MCF 10A (cell line): ENCODE measurements at regions of chr4 and their contacts with region 1.

Region 1: GRCh38 chr4:185039508-185040273 is 21.4 kb downstream of the HELT start:
- DNase-seq: peak; percentile 85
- H3K4me3 Mint-ChIP-seq: peak overlapping the region; percentile 67
- H3K27ac Mint-ChIP-seq: peak overlapping the region; percentile 65
- H3K4me1 Mint-ChIP-seq: peaks cover 8% of the 10 kb centered on the region
- H3K27me3 Mint-ChIP-seq: no peaks in the 10 kb centered on the region
- CTCF ChIP-seq: peak; percentile 73

Region 2: GRCh38 chr4:184097241-184097605 is 942.5 kb before region 1 on chr4:
- CTCF ChIA-PET with region 1: no interaction called
- POLR2A ChIA-PET with region 1: no interaction called
- intact Hi-C with region 1: no loop called
- DNase-seq: no peak
- H3K4me3 Mint-ChIP-seq: no peak overlapping the region
- H3K27ac Mint-ChIP-seq: no peak overlapping the region
- H3K4me1 Mint-ChIP-seq: no peaks in the 10 kb centered on the region
- H3K27me3 Mint-ChIP-seq: no peaks in the 10 kb centered on the region
- CTCF ChIP-seq: no peak

Region 3: GRCh38 chr4:185023471-185023870 is 16.2 kb before region 1 on chr4:
- CTCF ChIA-PET with region 1: interaction called, 17 read pairs
- POLR2A ChIA-PET with region 1: no interaction called
- intact Hi-C with region 1: no loop called
- DNase-seq: no peak
- H3K4me3 Mint-ChIP-seq: no peak overlapping the region
- H3K27ac Mint-ChIP-seq: no peak overlapping the region
- H3K4me1 Mint-ChIP-seq: no peaks in the 10 kb centered on the region
- H3K27me3 Mint-ChIP-seq: peaks cover 87% of the 10 kb centered on the region
- CTCF ChIP-seq: no peak

Region 4: DNA sequence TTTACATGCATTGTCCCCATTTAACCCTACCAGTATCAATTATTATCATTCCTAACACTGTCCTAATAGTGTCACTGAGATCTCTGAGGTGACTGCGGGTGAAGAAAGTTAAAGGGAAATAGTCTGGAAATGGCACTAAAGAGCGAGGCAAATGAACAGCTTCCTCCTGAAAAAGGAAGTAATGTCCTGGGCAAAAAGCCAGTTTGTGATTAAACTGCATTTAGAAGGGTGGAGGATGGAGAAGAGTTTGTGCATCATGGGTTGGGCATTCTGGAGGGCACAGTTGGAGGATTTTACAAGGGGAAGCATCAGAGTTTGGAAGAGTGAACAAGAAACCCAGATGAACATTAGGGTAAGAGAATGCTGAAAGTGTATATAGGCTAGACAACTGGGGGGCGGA is 42.9 kb after region 1 on chr4:
- CTCF ChIA-PET with region 1: interaction called, 10 read pairs
- POLR2A ChIA-PET with region 1: interaction called, 3 read pairs
- intact Hi-C with region 1: no loop called
- DNase-seq: peak; percentile 6
- H3K4me3 Mint-ChIP-seq: no peak overlapping the region
- H3K27ac Mint-ChIP-seq: no peak overlapping the region
- H3K4me1 Mint-ChIP-seq: peaks cover 5% of the 10 kb centered on the region
- H3K27me3 Mint-ChIP-seq: no peaks in the 10 kb centered on the region
- CTCF ChIP-seq: no peak

Region 5: GRCh38 chr4:185134307-185134869 is 94.7 kb after region 1 on chr4:
- CTCF ChIA-PET with region 1: interaction called, 27 read pairs
- POLR2A ChIA-PET with region 1: interaction called, 4 read pairs
- intact Hi-C with region 1: loop called (anchors 1 kb)
- DNase-seq: peak; percentile 61
- H3K4me3 Mint-ChIP-seq: no peak overlapping the region
- H3K27ac Mint-ChIP-seq: no peak overlapping the region
- H3K4me1 Mint-ChIP-seq: no peaks in the 10 kb centered on the region
- H3K27me3 Mint-ChIP-seq: no peaks in the 10 kb centered on the region
- CTCF ChIP-seq: peak; percentile 64

Region 6: GRCh38 chr4:185921583-185922555 is 882.2 kb after region 1 on chr4:
- CTCF ChIA-PET with region 1: no interaction called
- POLR2A ChIA-PET with region 1: no interaction called
- intact Hi-C with region 1: no loop called
- DNase-seq: no peak
- H3K4me3 Mint-ChIP-seq: no peak overlapping the region
- H3K27ac Mint-ChIP-seq: no peak overlapping the region
- H3K4me1 Mint-ChIP-seq: no peaks in the 10 kb centered on the region
- H3K27me3 Mint-ChIP-seq: no peaks in the 10 kb centered on the region
- CTCF ChIP-seq: no peak